ENCODE measurements at regions of chr12 and their contacts with region 1.

Region 1: DNA sequence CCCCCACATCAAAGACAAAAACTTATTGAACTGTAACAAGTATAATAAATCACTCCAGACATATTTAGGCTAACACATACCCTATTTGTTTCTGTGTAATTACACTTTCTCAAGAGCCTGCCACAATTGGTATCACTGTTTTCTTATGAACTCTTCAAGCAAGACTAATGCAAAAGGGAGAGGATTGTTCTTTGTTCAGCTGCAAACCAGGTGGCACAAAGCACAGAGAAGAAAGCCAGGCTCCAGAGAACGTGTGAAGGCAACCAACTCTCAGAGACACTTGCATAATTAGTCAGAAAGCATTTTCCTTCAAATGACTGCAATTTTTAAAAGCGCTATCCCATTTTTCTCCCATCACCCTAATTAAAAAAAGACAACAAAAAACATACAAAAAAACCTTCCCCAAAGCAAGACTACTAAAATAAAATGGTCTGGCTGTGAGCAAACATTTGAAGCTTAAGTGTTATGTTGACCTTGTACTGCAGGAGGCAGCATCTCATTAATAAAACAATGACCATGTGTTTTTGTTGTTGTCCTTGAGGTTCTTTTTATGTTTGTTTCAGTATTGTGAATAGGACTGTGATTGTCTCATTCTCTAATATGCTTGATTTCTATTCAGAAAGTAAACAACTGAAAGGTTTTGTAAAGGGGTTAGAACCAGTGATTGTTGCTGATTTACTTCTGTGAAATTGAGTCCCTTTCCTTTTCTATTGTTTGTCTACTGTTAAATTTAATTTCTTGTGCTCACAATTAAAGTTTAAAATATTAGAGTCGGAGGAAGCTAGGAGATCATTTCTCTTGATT is 452.7 kb upstream of the PDE3A start:
- DNase-seq: peak; percentile 44
- ATAC-seq: peak; percentile 66
- H3K4me3 ChIP-seq: no peak overlapping the region
- H3K27ac ChIP-seq: no peak overlapping the region
- H3K4me1 ChIP-seq: no peaks in the 10 kb centered on the region
- H3K27me3 ChIP-seq: no peaks in the 10 kb centered on the region
- CTCF ChIP-seq: peak; percentile 66
- POLR2A ChIP-seq: no peak
- RAD21 ChIP-seq: peak; percentile 77

Region 2: DNA sequence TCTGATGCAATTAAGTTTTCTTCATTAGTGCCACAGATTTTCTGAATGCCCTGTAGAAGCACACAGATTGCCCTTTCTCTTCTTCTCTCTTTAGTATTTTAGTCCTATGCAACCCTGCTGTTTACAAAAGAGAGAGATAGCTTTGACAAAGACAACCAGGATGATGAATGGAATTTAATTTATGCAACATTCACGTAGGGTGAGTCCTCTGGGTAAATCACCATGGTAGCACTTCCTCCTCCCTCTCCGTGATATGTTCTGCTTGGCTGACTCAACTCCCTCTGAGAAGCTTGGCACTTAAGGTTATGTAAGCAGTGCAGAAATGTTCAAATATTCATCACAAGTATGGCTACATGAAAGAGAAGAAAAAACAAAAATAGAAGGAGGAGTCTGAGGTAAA is 51.9 kb after region 1 on chr12:
- CTCF ChIA-PET with region 1: no interaction called
- POLR2A ChIA-PET with region 1: no interaction called
- dilution Hi-C with region 1: no loop called
- in situ Hi-C with region 1: loop called (anchors 10 kb)
- intact Hi-C with region 1: no loop called
- DNase-seq: peak; percentile 96
- ATAC-seq: peak; percentile 97
- H3K4me3 ChIP-seq: no peak overlapping the region
- H3K27ac ChIP-seq: no peak overlapping the region
- H3K4me1 ChIP-seq: peaks cover 6% of the 10 kb centered on the region
- H3K27me3 ChIP-seq: no peaks in the 10 kb centered on the region
- CTCF ChIP-seq: no peak
- POLR2A ChIP-seq: no peak
- RAD21 ChIP-seq: no peak

Region 3: DNA sequence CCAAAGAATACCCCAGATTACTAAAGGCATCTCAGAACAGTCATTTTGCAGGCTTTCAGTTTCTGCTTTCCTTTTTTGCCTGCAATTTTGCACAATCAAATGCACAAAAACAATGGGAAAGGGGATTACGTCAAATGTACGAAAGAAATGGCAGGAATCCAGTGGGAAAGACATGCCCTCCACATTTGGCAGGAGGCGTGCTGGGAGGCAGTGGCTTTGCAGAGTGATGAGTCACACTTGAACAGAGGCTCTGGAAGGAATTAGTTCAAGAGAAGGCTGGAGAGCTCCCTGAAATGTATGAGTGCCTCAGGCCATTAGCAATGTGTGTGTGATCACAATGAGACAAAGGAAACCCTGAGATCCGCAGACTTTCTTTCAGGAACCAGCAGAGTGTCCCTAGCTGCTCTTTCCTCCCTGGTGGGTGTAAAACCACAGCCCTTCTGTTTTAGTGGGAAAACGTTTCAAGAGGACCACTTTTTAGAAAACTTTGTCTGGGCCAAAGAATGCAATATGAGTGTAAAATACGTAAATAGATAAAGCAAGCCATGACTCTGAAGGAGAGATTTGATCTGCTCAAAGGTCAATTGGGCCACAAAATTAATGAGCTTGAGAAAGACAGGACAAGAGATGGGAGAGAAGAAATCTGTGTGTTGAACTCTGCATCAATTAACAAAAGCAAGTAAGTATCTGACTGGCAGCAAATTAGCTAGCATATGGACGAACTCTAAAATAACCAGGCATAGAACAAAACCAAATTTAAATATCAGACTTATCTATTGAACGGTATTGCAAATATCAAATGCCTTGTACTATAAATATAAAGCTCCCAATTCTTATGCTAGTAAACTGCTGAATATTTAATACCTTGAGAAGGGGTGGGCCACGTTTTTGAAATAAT is 297.3 kb after region 1 on chr12:
- CTCF ChIA-PET with region 1: no interaction called
- POLR2A ChIA-PET with region 1: no interaction called
- dilution Hi-C with region 1: no loop called
- in situ Hi-C with region 1: loop called (anchors 25 kb)
- intact Hi-C with region 1: no loop called
- DNase-seq: peak; percentile 98
- ATAC-seq: peak; percentile 99
- H3K4me3 ChIP-seq: no peak overlapping the region
- H3K27ac ChIP-seq: peak overlapping the region; percentile 65; the same call in 1 of the 2 replicates
- H3K4me1 ChIP-seq: peaks cover 1% of the 10 kb centered on the region
- H3K27me3 ChIP-seq: no peaks in the 10 kb centered on the region
- CTCF ChIP-seq: no peak
- POLR2A ChIP-seq: no peak
- RAD21 ChIP-seq: no peak

Region 4: GRCh38 chr12:20369305-20370005 is 453.9 kb after region 1 on chr12:
- CTCF ChIA-PET with region 1: interaction called, 3 read pairs
- POLR2A ChIA-PET with region 1: no interaction called
- dilution Hi-C with region 1: no loop called
- in situ Hi-C with region 1: loop called (anchors 10 kb)
- intact Hi-C with region 1: loop called (anchors 2 kb)
- DNase-seq: peak; percentile 39
- ATAC-seq: peak; percentile 73
- H3K4me3 ChIP-seq: peak overlapping the region; percentile 89
- H3K27ac ChIP-seq: peak overlapping the region; percentile 35
- H3K4me1 ChIP-seq: no peaks in the 10 kb centered on the region
- H3K27me3 ChIP-seq: no peaks in the 10 kb centered on the region
- CTCF ChIP-seq: no peak
- POLR2A ChIP-seq: no peak
- RAD21 ChIP-seq: no peak

Region 5: GRCh38 chr12:20601668-20602280 is 686.2 kb after region 1 on chr12:
- CTCF ChIA-PET with region 1: interaction called, 6 read pairs
- POLR2A ChIA-PET with region 1: no interaction called
- dilution Hi-C with region 1: no loop called
- in situ Hi-C with region 1: no loop called
- intact Hi-C with region 1: loop called (anchors 2 kb)
- DNase-seq: peak; percentile 73
- ATAC-seq: peak; percentile 52
- H3K4me3 ChIP-seq: no peak overlapping the region
- H3K27ac ChIP-seq: no peak overlapping the region
- H3K4me1 ChIP-seq: no peaks in the 10 kb centered on the region; the same call in 1 of the 2 replicates
- H3K27me3 ChIP-seq: no peaks in the 10 kb centered on the region
- CTCF ChIP-seq: peak; percentile 66
- POLR2A ChIP-seq: no peak
- RAD21 ChIP-seq: peak; percentile 54

Region 6: DNA sequence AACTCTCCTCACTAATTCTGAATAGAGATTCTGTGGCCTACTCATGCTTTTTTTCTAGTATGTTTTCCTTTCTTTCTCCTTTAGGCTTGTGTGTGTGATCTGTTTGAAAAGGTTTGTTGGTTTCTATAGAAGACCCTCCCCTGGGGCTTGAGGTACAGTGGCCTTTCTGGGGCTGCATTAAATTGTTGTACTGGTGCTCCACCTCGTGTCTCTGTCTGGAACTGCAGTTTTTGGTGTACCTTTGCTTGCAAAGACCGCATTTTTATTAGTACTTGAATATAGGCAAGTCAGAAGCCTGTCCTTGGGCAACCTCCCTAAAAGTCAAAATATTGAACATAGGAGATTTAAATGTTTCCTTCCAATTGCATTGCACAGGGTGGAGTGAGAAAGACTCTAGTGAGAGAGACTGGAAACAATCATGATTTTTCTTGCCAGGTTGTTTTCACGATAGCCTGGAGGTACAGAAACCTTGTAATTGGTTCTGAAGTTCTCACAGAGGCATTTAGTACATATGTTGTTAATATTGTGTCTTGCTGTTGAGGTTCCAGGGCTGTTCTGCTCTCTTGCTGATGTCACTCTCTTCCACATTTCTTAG is 1254.4 kb after region 1 on chr12:
- CTCF ChIA-PET with region 1: no interaction called
- POLR2A ChIA-PET with region 1: no interaction called
- dilution Hi-C with region 1: no loop called
- in situ Hi-C with region 1: no loop called
- intact Hi-C with region 1: loop called (anchors 5 kb)
- DNase-seq: peak; percentile 25
- ATAC-seq: peak; percentile 77
- H3K4me3 ChIP-seq: no peak overlapping the region
- H3K27ac ChIP-seq: no peak overlapping the region
- H3K4me1 ChIP-seq: no peaks in the 10 kb centered on the region
- H3K27me3 ChIP-seq: no peaks in the 10 kb centered on the region
- CTCF ChIP-seq: peak; percentile 56
- POLR2A ChIP-seq: no peak
- RAD21 ChIP-seq: peak; percentile 59

Measured in IMR-90 (cell line).